ENCODE measurements at regions of chr9 and their contacts with region 1.

Region 1: DNA sequence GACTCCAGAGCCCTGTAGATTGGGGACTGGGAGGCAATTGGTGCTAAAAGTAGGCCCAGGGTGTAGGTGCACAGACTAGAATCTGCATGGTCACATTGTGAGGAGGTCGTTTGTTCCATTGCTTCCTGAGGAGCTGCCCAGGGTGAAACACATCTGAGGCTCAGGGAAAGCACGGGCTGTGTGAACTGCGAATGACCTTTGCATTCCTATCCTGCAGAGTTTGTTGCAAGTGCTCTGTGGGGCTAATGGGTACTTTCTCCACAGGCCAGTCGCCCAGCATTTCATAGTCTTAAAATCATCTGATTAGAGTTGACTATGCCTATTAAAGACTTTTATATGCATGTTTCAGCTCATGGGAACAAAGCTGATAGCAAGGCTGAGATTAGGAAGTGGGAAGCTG is 14.4 kb upstream of the SLC46A2 start:
- DNase-seq: no peak
- H3K4me3 ChIP-seq: no peak overlapping the region
- H3K27ac ChIP-seq: no peak overlapping the region
- H3K4me1 ChIP-seq: peaks cover 0 to 12% (median 0%) of the 10 kb centered on the region in 4 donors
- H3K27me3 ChIP-seq: no peaks in the 10 kb centered on the region
- CTCF ChIP-seq: no peak

Region 2: DNA sequence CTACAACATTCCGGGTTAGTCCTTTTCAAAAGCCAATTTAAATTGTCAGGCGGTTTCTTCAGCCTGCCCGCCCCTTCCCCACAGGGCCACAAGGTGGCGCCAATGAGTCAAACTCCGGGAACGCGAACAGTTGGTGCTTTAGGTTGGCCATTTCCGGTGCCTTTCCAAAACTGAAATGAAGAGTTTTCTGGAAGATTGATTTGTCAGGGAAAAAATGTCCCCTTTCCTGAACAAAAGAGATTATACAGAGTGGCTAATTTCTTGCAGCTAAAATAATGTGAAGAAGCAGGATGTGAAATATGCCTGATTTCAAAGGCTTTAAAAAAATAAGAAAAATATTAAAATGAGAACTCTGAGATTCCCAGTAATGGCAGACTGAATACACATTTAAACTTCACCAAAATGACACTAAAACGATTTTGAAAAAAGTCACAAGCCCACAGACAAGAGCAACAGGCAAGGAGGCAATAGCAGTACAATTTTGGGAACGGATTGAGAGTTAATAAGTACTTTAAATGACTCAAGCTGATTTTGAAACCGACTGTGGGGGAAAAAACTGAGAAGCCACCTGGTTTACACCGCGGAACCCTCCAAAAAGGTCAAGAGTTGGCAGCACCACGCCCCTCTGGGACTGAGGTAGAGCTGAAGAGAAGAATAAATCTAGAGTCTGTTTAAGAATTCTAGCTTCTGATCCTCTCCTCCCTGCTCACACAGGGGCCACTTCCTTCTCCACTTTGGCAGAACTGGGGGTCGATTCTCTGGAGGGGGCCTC is 60.1 kb before region 1 on chr9:
- intact Hi-C with region 1: loop called (anchors 5 kb)
- DNase-seq: peak; percentile 73 to 86
- H3K4me3 ChIP-seq: no peak overlapping the region
- H3K27ac ChIP-seq: no peak overlapping the region
- H3K4me1 ChIP-seq: peaks cover 0 to 5% (median 0%) of the 10 kb centered on the region in 4 donors
- H3K27me3 ChIP-seq: no peaks in the 10 kb centered on the region
- CTCF ChIP-seq: peak; percentile 83 to 98

Region 3: GRCh38 chr9:113309204-113309813 is 404.2 kb after region 1 on chr9:
- intact Hi-C with region 1: no loop called
- DNase-seq: no peak
- H3K4me3 ChIP-seq: no peak overlapping the region
- H3K27ac ChIP-seq: no peak overlapping the region
- H3K4me1 ChIP-seq: no peaks in the 10 kb centered on the region
- H3K27me3 ChIP-seq: peaks cover 0 to 14% of the 10 kb centered on the region in 2 donors
- CTCF ChIP-seq: peak; percentile 50 to 54

Measured in tibial artery (tissue), 4 donors.